ENCODE measurements at regions of chr12 and their contacts with region 1.

Region 1: GRCh38 chr12:47742253-47742825 is 16.3 kb downstream of the RAPGEF3 start:
- DNase-seq: peak; percentile 63 to 67
- ATAC-seq: peak; percentile 12 to 75; a peak in 3 of 6 replicates
- H3K4me3 ChIP-seq: no peak overlapping the region
- H3K27ac ChIP-seq: no peak overlapping the region
- H3K4me1 ChIP-seq: peaks cover 8% of the 10 kb centered on the region
- CTCF ChIP-seq: peak; percentile 98
- EP300 ChIP-seq: no peak
- POLR2A ChIP-seq: no peak
- RAD21 ChIP-seq: peak; percentile 93 to 97

Region 2: DNA sequence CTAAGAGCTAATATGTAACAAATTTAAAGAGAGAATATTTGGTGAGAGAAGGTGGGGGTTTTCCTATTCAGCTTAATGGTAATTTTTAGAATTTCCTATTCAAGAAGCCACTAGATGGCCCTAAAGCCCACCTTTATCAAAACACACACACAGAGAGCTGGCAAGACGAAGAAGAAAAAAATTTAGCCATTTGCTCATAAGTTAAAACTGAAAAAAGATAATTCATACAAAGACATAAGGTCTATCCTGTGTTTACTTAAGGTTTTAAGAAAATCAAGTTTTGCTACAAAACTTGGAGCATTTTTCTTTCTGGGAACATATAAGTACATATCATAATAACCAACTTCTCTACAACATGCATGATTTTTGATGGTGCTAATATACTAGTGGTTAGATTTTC is 709.7 kb before region 1 on chr12:
- CTCF ChIA-PET with region 1: interaction called, 10 read pairs
- POLR2A ChIA-PET with region 1: no interaction called
- DNase-seq: peak in 1 of 2 experiments; percentile 85
- ATAC-seq: peak; percentile 59 to 80; a peak in 4 of 6 replicates
- H3K4me3 ChIP-seq: no peak overlapping the region
- H3K27ac ChIP-seq: peak overlapping the region; percentile 88 to 93
- H3K4me1 ChIP-seq: peaks cover 50% of the 10 kb centered on the region
- CTCF ChIP-seq: peak; percentile 93
- EP300 ChIP-seq: no peak
- POLR2A ChIP-seq: no peak
- RAD21 ChIP-seq: peak; percentile 92 to 97

Region 3: DNA sequence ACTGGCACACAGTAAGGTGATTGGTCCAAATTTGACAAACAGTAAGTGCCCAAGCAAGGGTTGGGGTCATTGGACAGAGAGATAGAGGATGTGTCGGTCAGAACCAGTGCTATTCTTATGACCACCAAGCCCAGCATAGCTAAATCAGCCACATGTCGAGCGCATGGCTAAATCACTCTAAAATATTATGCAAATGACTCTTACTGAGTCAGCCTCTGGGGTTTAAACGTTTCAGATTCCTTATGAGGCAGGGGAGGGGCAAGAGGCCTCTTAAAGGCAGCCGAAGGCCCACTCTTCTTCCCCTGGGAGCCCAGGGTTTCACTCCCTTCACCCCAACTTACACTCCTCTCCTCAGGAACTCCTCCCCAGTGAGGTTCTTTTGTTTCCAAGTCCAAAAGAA is 16.4 kb before region 1 on chr12:
- CTCF ChIA-PET with region 1: interaction called, 202 read pairs
- POLR2A ChIA-PET with region 1: no interaction called
- DNase-seq: no peak
- ATAC-seq: no peak
- H3K4me3 ChIP-seq: no peak overlapping the region
- H3K27ac ChIP-seq: no peak overlapping the region
- H3K4me1 ChIP-seq: no peaks in the 10 kb centered on the region
- CTCF ChIP-seq: no peak
- EP300 ChIP-seq: no peak
- POLR2A ChIP-seq: no peak
- RAD21 ChIP-seq: no peak

Region 4: DNA sequence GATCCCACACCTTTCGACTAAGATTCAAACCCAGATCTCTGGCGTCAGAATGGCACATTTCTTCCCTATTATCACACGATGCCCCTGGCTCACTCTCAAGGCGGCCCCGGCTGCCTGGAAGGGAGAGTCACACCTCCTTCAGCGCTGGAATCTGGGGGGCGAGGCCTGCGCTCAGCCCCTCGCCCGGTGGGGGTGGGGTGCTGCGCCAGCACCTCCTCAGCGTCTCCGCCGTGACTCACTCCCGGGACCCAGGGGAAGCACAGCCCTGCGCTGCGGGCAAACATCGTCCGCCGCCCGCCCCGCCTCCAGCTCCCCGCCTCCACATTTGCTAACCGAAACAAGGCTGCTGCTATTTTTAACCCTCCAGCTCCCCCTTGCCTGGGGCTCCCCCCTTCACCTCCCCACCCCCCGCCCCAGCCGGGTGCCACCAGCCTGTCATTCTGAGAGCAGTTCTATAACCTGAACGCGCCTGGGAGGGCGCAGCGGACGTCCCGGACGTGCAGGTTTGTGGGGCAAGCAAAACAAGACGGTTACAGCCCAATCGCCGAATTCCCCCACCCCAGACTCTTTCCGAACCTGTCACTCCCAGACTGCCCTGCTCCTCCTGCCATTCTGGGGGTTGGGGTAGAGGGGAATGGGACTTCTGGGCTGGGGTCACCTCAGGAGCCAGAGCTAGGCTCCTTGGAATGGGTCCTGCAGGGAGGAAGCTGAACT is 70.6 kb after region 1 on chr12:
- CTCF ChIA-PET with region 1: interaction called, 29 read pairs
- POLR2A ChIA-PET with region 1: no interaction called
- DNase-seq: peak; percentile 74 to 85
- ATAC-seq: peak; percentile 77 to 85
- H3K4me3 ChIP-seq: peak overlapping the region; percentile 37
- H3K27ac ChIP-seq: peak overlapping the region; percentile 76 to 85
- H3K4me1 ChIP-seq: peaks cover 93% of the 10 kb centered on the region
- CTCF ChIP-seq: no peak
- EP300 ChIP-seq: no peak
- POLR2A ChIP-seq: no peak
- RAD21 ChIP-seq: no peak; a peak in 1 of 5 replicates

Region 5: DNA sequence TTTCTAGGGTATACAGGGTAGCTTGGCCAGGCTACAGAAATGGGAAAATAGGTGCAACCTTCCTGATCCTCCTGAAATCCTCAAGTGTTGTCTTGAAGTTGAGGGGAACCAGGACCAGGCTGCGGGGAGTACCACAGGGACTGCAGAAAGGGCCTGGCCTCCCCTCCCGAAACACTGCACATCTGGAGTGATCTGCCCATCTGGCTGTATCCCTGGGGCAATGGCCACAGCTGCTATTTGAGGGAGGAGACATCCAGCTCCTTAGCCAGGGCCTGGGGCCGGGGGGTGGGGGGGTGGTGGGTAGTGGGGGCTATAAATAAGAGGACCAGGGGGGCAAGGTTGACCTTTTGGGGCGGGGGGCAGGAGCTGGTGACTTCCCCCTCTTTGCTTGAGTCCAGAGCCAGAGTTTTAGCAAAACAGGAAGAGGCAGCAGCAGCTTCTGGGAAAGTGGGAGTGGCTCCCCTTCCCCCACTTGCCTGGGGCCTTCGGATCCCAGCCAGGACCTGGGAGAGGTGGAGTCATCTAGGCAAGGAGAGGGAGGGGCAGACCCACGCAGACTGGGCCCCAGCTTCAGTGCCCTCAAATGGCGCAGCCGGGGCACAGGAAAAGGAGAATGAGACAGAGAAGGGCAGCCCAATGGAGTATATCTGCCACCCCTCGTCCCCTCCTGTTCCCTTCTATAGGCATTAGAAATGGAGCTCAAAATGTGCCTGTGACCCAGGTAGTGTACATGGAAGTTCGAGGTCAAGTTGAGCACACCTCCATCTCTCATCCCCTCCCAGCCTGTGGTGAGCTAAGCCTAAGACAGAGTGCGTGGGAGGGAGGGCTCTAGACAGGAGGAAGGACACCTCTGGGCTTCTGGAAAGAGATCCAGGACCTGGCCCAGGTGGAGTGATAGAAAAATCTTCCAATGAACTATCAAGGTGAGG is 86.5 kb after region 1 on chr12:
- CTCF ChIA-PET with region 1: interaction called, 147 read pairs
- POLR2A ChIA-PET with region 1: no interaction called
- DNase-seq: peak; percentile 60 to 72
- ATAC-seq: peak; percentile 57 to 64; a peak in 5 of 6 replicates
- H3K4me3 ChIP-seq: no peak overlapping the region
- H3K27ac ChIP-seq: peak overlapping the region; percentile 59 to 86
- H3K4me1 ChIP-seq: peaks cover 45% of the 10 kb centered on the region
- CTCF ChIP-seq: no peak
- EP300 ChIP-seq: no peak
- POLR2A ChIP-seq: no peak
- RAD21 ChIP-seq: no peak

Measured in A549 (cell line).